Psoas muscle (tissue), 8 donors: ENCODE measurements at regions of chr13 and their contacts with region 1.

Region 1: GRCh38 chr13:110412132-110412914 is 105.2 kb downstream of the COL4A2 start:
- DNase-seq: peak; percentile 86 to 91
- ATAC-seq: peak; percentile 83 to 92 (median 85)
- H3K4me3 ChIP-seq: peak overlapping the region; percentile 4
- H3K27ac ChIP-seq: peak overlapping the region; percentile 82
- H3K4me1 ChIP-seq: peaks cover 38% of the 10 kb centered on the region
- H3K27me3 ChIP-seq: no peaks in the 10 kb centered on the region
- CTCF ChIP-seq: peak; percentile 80

Region 2: GRCh38 chr13:108961542-108962125 is 1450.7 kb before region 1 on chr13:
- intact Hi-C with region 1: loop called (anchors 5 to 10 kb)
- DNase-seq: no peak
- ATAC-seq: peak; percentile 57 to 88 (median 76)
- H3K4me3 ChIP-seq: no peak overlapping the region
- H3K27ac ChIP-seq: no peak overlapping the region
- H3K4me1 ChIP-seq: no peaks in the 10 kb centered on the region
- H3K27me3 ChIP-seq: no peaks in the 10 kb centered on the region
- CTCF ChIP-seq: peak; percentile 88

Region 3: DNA sequence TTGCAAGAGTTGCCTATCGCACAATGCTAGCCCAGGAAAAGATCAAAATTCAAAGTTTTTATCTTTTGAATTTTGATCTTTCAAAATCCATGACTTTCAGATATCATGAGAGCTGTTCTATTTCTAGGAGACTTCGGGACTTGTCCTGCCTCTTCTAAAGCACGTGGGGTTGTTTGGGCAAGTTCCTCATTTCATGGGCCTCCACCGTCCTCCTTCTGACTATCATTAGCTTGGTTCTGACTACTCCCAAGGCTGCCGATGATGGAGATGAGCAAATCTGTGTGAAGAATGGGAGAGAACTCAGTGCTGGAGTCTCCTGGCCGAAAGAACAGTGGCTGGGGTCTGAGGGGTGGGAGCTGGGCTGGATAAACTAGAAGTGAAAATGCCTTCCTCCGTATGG is 191.9 kb before region 1 on chr13:
- intact Hi-C with region 1: loop called (anchors 2 to 5 kb)
- DNase-seq: no peak
- ATAC-seq: no peak
- H3K4me3 ChIP-seq: no peak overlapping the region
- H3K27ac ChIP-seq: no peak overlapping the region
- H3K4me1 ChIP-seq: peaks cover 21% of the 10 kb centered on the region
- H3K27me3 ChIP-seq: no peaks in the 10 kb centered on the region
- CTCF ChIP-seq: no peak

Region 4: GRCh38 chr13:110225609-110226562 is 186.4 kb before region 1 on chr13:
- intact Hi-C with region 1: loop called (anchors 2 to 5 kb)
- DNase-seq: peak in 1 of 2 donors; percentile 26
- ATAC-seq: no peak
- H3K4me3 ChIP-seq: no peak overlapping the region
- H3K27ac ChIP-seq: no peak overlapping the region
- H3K4me1 ChIP-seq: peaks cover 4% of the 10 kb centered on the region
- H3K27me3 ChIP-seq: no peaks in the 10 kb centered on the region
- CTCF ChIP-seq: no peak

Region 5: GRCh38 chr13:110306960-110307746 is 105.2 kb before region 1 on chr13 and contains the starts of genes COL4A1 and COL4A2:
- intact Hi-C with region 1: loop called in 1 of 2 experiments (anchors 5 kb)
- DNase-seq: peak; percentile 83 to 86
- ATAC-seq: peak; percentile 58 to 76 (median 74)
- H3K4me3 ChIP-seq: peak within 1 kb of the TSS; percentile 77
- H3K27ac ChIP-seq: peak within 1 kb of the TSS; percentile 84
- H3K4me1 ChIP-seq: peaks cover 14% of the 10 kb centered on the region
- H3K27me3 ChIP-seq: peaks cover 0 to 94% (median 13%) of the 10 kb centered on the region in 3 donors
- CTCF ChIP-seq: no peak
- total RNA-seq, gene COL4A1: 87.3 to 127 (median 110) TPM
- total RNA-seq, gene COL4A2: 49.1 to 64.0 (median 59.9) TPM